ENCODE measurements at regions of chr10 and their contacts with region 1.

Region 1: GRCh38 chr10:101569838-101570766 is 18.0 kb downstream of the POLL start:
- DNase-seq: peak; percentile 57 to 71
- H3K4me3 ChIP-seq: peak overlapping the region; percentile 33 to 82 (median 53)
- H3K27ac ChIP-seq: no peak overlapping the region
- H3K4me1 ChIP-seq: peaks cover 7 to 11% of the 10 kb centered on the region in 2 donors
- H3K27me3 ChIP-seq: peaks cover 0 to 44% of the 10 kb centered on the region in 2 donors
- CTCF ChIP-seq: peak in 2 of 3 donors; percentile 56 to 71
- POLR2A ChIP-seq: no peak

Region 2: GRCh38 chr10:101214446-101215396 is 355.4 kb before region 1 on chr10:
- intact Hi-C with region 1: loop called (anchors 10 kb)
- DNase-seq: no peak
- H3K4me3 ChIP-seq: peak overlapping the region in 1 of 3 donors; percentile 54
- H3K27ac ChIP-seq: no peak overlapping the region
- H3K4me1 ChIP-seq: peaks cover 0 to 17% of the 10 kb centered on the region in 2 donors
- H3K27me3 ChIP-seq: peaks cover 8 to 94% of the 10 kb centered on the region in 2 donors
- CTCF ChIP-seq: peak in 2 of 3 donors; percentile 64 to 74
- POLR2A ChIP-seq: no peak

Region 3: DNA sequence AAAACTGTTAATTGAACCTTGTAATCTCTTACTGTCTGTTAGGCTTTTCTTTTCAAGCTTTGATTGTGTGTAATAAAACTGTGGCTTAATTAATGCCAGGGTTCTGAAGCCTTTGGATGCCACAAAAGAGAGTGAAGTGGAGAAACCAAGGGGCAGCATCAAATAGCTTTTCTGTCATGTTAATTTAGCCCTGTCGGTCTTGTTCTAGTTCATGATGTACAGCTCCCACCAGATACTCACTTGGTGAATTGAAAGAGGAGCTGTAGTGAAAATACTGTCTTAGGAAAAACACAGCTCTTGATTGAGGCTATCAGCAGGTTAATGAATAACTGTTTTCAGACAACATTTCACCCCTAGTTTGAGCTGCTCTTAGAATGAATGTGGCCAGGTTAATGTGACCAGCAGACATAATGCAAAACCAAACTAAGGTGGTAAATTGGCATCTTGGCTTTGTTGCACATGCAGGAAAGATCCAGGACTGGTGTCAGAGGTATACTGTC is 76.3 kb before region 1 on chr10:
- intact Hi-C with region 1: loop called (anchors 2 kb)
- DNase-seq: no peak
- H3K4me3 ChIP-seq: no peak overlapping the region
- H3K27ac ChIP-seq: no peak overlapping the region
- H3K4me1 ChIP-seq: no peaks in the 10 kb centered on the region
- H3K27me3 ChIP-seq: no peaks in the 10 kb centered on the region
- CTCF ChIP-seq: no peak
- POLR2A ChIP-seq: no peak

Region 4: GRCh38 chr10:101602761-101603398 is 32.8 kb after region 1 on chr10:
- intact Hi-C with region 1: loop called (anchors 1 kb)
- DNase-seq: peak; percentile 45 to 73
- H3K4me3 ChIP-seq: no peak overlapping the region
- H3K27ac ChIP-seq: no peak overlapping the region
- H3K4me1 ChIP-seq: no peaks in the 10 kb centered on the region
- H3K27me3 ChIP-seq: no peaks in the 10 kb centered on the region
- CTCF ChIP-seq: peak; percentile 38 to 86 (median 77)
- POLR2A ChIP-seq: no peak

Measured in breast epithelium (tissue), 4 donors.